PC-3 (cell line): ENCODE measurements at regions of chr14 and their contacts with region 1.

Region 1: DNA sequence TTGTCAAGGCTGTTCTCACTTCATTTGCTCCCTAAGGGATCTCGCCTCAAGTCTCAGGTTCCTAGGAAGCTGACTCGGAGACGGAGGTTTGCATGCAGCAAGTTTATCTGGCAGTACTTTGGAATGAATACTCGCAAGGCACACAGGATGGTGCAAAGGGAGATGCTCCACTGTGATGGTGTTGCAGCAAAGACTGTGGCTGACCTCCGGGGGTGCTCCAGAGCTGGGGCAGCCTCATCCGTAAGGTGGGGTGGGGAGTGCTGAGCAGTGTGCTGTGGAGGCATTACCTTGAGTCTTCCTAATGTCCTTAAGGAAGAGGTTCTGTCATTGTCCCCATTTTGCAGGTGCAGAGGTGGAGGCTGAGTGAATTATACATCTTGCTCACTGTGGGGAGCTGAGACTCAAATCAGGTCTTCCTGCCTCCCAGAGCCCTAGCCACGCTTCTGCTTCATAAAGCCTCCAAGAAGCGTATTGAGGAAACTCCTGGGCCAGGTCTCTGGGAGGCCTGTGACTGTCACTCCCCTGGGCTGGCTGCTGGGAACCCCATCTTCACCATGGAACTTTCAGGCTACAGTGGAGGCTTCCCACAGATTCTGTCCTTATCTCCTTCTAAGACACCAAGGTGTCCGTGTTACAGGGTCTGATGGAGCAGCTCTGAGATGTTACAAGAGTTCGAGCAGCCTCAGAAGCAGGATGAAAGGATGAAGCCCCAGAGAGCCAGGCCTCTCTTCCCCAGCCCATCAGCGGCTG is 39.5 kb downstream of the GALNT16 start:
- DNase-seq: no peak
- ATAC-seq: peak; percentile 27; the same call in 1 of the 2 replicates
- H3K4me3 ChIP-seq: no peak overlapping the region
- H3K27ac ChIP-seq: no peak overlapping the region
- H3K4me1 ChIP-seq: no peaks in the 10 kb centered on the region
- H3K27me3 ChIP-seq: peaks cover 62% of the 10 kb centered on the region
- CTCF ChIP-seq: no peak

Region 2: GRCh38 chr14:69101331-69101826 is 198.1 kb before region 1 on chr14:
- CTCF ChIA-PET with region 1: no interaction called
- POLR2A ChIA-PET with region 1: interaction called, 14 read pairs
- intact Hi-C with region 1: no loop called
- DNase-seq: peak; percentile 81
- ATAC-seq: peak; percentile 86
- H3K4me3 ChIP-seq: no peak overlapping the region
- H3K27ac ChIP-seq: 0 out of 2 replicates have a peak overlapping the region, but pooled peaks have one; percentile 5
- H3K4me1 ChIP-seq: peaks cover 4% of the 10 kb centered on the region; the same call in 1 of the 2 replicates
- H3K27me3 ChIP-seq: no peaks in the 10 kb centered on the region
- CTCF ChIP-seq: peak; percentile 92

Region 3: DNA sequence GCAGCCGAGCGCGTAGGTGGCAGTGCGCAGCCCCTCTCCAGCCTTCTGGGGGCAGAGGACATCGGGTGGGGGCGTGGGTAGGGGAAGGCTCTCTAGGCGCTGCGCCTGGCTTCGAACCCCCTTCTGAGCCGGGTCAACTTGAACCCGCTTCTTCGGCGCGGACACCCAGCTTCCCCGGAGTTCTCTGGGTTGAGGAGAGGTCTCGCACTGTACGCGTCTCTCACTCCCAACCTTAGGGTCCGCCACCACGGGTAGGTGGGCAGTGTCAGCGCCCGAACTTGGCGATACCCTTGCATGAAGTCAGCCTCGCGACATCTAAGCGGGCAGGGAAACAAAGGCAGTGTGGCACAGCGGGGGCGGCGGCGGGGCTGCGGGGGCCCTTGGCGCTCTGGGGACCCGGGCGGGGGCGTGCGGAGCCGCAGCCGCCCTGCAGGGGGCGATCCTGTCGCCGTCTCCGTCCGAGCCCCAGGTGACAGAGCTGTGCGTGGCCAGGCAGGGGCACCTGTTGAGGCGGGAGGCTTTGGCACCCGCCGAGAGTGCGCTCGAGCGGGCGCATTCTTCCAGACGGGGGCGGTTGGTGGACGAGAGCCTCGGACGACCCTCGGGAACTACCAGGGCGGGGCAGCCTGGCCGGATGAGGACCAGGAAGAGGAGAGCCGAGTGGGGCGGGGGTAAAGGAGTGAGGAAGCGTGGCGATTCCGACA is 38.4 kb before region 1 on chr14:
- CTCF ChIA-PET with region 1: no interaction called
- POLR2A ChIA-PET with region 1: no interaction called
- intact Hi-C with region 1: loop called (anchors 5 kb)
- DNase-seq: peak; percentile 37
- ATAC-seq: peak; percentile 51
- H3K4me3 ChIP-seq: peak overlapping the region; percentile 50; the same call in 1 of the 2 replicates
- H3K27ac ChIP-seq: no peak overlapping the region
- H3K4me1 ChIP-seq: peaks cover 7% of the 10 kb centered on the region; the same call in 1 of the 2 replicates
- H3K27me3 ChIP-seq: peaks cover 55% of the 10 kb centered on the region
- CTCF ChIP-seq: peak; percentile 67